ENCODE measurements at regions of chr7 and their contacts with region 1.

Region 1: GRCh38 chr7:18890134-18890533 is 227.3 kb downstream of the TWIST1 start:
- DNase-seq: peak; percentile 52
- H3K4me3 ChIP-seq: no peak overlapping the region
- H3K27ac ChIP-seq: peak overlapping the region; percentile 54 to 100
- H3K4me1 ChIP-seq: peaks cover 17 to 57% of the 10 kb centered on the region in 2 experiments; a peak in 3 of 4 replicates
- H3K27me3 ChIP-seq: no peaks in the 10 kb centered on the region
- CTCF ChIP-seq: no peak
- EP300 ChIP-seq: peak; percentile 96 to 100
- RAD21 ChIP-seq: peak; percentile 52

Region 2: GRCh38 chr7:18700147-18700546 is 190.0 kb before region 1 on chr7:
- CTCF ChIA-PET with region 1: interaction called, 8 read pairs
- POLR2A ChIA-PET with region 1: interaction called, 23 read pairs
- DNase-seq: no peak
- H3K4me3 ChIP-seq: no peak overlapping the region
- H3K27ac ChIP-seq: peak overlapping the region in 1 of 2 experiments; percentile 100; a peak in 2 of 4 replicates
- H3K4me1 ChIP-seq: peaks cover 0 to 61% of the 10 kb centered on the region in 2 experiments; a peak in 3 of 4 replicates
- H3K27me3 ChIP-seq: no peaks in the 10 kb centered on the region
- CTCF ChIP-seq: peak; percentile 44
- EP300 ChIP-seq: no peak
- RAD21 ChIP-seq: no peak

Region 3: DNA sequence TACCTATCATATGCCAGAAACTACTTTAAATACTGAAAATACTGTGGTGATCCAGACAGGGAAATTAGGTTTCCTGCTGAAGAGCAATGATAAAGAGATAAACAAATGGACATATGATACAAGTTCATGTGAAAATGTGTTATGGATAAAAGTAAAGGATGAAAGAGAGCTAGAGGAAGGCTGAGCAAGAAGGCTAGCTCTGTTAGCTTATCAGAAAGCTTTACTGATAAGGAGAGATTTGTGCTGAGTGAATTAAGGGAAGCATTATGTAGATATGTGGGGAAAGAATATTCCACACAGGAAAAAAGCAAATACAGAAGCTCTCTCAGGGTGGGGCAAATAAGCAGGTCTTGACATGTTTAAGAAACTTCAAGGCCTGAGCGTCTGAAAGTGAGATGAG is 86.2 kb before region 1 on chr7:
- CTCF ChIA-PET with region 1: interaction called, 13 read pairs
- POLR2A ChIA-PET with region 1: interaction called, 18 read pairs
- DNase-seq: peak; percentile 48
- H3K4me3 ChIP-seq: no peak overlapping the region
- H3K27ac ChIP-seq: peak overlapping the region in 1 of 2 experiments; percentile 96; a peak in 2 of 4 replicates
- H3K4me1 ChIP-seq: peaks cover 0 to 32% of the 10 kb centered on the region in 2 experiments; a peak in 2 of 4 replicates
- H3K27me3 ChIP-seq: no peaks in the 10 kb centered on the region
- CTCF ChIP-seq: no peak
- EP300 ChIP-seq: peak; percentile 23 to 99; a peak in 2 of 4 replicates
- RAD21 ChIP-seq: peak; percentile 54

Region 4: GRCh38 chr7:18846765-18847215 is 43.3 kb before region 1 on chr7:
- CTCF ChIA-PET with region 1: interaction called, 36 read pairs
- POLR2A ChIA-PET with region 1: interaction called, 20 read pairs
- DNase-seq: peak; percentile 75
- H3K4me3 ChIP-seq: no peak overlapping the region
- H3K27ac ChIP-seq: peak overlapping the region; percentile 60 to 100; a peak in 3 of 4 replicates
- H3K4me1 ChIP-seq: peaks cover 23 to 52% of the 10 kb centered on the region in 2 experiments
- H3K27me3 ChIP-seq: no peaks in the 10 kb centered on the region
- CTCF ChIP-seq: no peak
- EP300 ChIP-seq: peak; percentile 96 to 100
- RAD21 ChIP-seq: peak; percentile 60

Region 5: DNA sequence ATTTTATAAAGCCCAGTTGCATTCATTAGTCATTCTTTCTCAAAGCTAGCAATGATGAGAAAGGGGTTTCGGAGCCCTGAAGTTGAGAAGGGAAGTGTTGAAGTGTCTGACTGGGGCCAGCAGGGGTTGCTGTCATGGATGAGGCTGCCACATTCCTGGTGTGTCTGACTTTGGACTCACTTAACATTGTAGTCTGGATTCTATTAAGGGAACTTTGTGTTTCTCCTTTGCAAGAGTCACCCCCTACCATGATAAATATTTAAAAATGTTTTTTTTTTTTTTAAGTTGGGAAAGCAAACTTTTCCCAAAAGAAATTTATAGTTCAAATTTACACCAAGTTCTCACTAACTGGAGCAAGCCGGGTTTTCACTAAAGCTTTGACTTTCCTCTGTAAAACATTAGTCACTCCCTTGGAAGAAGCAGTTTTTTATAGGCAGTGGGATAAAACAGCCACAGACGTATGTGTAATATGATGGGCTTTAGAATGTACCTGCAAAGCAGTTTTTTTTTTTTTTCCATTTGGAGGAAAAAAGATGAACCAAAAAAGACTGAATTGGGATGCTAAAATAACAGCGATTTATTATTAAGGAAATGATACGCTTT is 16.3 kb before region 1 on chr7:
- CTCF ChIA-PET with region 1: interaction called, 12 read pairs
- POLR2A ChIA-PET with region 1: no interaction called
- DNase-seq: peak; percentile 19
- H3K4me3 ChIP-seq: no peak overlapping the region
- H3K27ac ChIP-seq: peak overlapping the region; percentile 18 to 27
- H3K4me1 ChIP-seq: peaks cover 0 to 3% of the 10 kb centered on the region in 2 experiments; a peak in 2 of 4 replicates
- H3K27me3 ChIP-seq: no peaks in the 10 kb centered on the region
- CTCF ChIP-seq: peak; percentile 77
- EP300 ChIP-seq: 0 out of 4 replicates have a peak, but pooled peaks of 1 of the 2 experiments have one; percentile 14
- RAD21 ChIP-seq: peak; percentile 54

Region 6: DNA sequence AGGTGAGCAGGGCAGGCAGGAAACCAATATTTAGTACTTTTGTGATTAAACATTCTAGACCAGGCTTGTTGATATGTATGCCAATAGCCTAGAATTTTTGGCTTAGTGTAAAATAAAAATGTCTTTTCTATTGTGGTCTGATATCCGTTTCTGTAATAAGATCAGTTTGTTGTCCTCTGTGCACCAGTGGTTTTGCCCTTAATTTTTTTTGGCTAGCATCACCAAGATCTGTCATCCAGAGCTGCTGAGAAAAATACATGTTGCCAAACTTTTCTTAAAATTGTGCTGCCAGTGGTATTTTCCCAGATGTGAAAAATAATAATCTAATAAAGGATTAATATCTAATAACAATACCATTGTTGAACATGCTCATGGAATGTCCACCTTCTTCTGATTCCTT is 111.7 kb after region 1 on chr7:
- CTCF ChIA-PET with region 1: no interaction called
- POLR2A ChIA-PET with region 1: no interaction called
- DNase-seq: no peak
- H3K4me3 ChIP-seq: no peak overlapping the region
- H3K27ac ChIP-seq: peak overlapping the region; percentile 66 to 99
- H3K4me1 ChIP-seq: peaks cover 27 to 51% of the 10 kb centered on the region in 2 experiments; a peak in 3 of 4 replicates
- H3K27me3 ChIP-seq: no peaks in the 10 kb centered on the region
- CTCF ChIP-seq: no peak
- EP300 ChIP-seq: peak in 1 of 2 experiments; percentile 70; a peak in 1 of 4 replicates
- RAD21 ChIP-seq: no peak

Measured in SK-N-SH (cell line).